ENCODE measurements at regions of chr5 and their contacts with region 1.

Region 1: DNA sequence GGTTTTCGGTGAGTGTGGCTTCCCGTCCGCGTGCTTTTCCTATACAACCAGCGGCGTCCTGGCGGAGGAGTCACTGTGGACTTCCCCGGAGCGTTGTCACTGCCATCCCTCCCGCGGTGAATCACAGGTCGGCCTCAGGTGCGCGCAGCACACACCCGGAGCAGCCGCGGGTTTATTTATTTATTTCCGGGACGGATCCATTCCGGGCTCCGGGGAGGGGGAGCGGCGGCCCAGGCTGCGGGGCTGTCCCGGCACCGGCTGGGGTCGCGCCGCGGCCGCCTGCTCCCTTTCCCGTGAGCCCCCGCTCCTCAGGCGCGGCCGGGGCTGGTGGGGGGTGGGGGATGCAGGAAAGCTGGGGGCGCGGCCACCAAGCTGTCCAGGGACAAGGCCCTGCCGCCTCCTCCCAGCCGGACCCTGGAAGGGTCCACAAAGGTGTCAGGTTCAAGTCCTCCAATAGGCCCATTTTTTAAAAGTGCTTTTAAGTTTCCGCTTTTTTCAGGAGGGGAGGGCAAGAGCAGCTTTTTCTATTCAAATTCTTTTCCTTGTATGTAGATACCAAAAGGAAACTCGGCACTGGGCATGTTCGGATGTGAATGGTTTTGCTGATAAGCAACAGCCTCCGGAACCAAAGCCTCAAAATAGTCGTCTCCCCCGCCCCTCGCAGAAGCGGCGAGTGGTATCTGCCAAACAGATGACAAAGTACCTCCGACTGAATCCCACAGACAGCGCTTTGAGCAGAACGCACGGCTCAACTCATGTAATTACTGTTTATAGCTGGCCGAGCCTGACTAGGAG is 192.5 kb downstream of the CD180 start:
- DNase-seq: peak; percentile 96
- H3K4me3 Mint-ChIP-seq: peak overlapping the region; percentile 96
- H3K27ac Mint-ChIP-seq: peak overlapping the region; percentile 97
- H3K4me1 Mint-ChIP-seq: peaks cover 56% of the 10 kb centered on the region
- H3K27me3 Mint-ChIP-seq: no peaks in the 10 kb centered on the region

Region 2: DNA sequence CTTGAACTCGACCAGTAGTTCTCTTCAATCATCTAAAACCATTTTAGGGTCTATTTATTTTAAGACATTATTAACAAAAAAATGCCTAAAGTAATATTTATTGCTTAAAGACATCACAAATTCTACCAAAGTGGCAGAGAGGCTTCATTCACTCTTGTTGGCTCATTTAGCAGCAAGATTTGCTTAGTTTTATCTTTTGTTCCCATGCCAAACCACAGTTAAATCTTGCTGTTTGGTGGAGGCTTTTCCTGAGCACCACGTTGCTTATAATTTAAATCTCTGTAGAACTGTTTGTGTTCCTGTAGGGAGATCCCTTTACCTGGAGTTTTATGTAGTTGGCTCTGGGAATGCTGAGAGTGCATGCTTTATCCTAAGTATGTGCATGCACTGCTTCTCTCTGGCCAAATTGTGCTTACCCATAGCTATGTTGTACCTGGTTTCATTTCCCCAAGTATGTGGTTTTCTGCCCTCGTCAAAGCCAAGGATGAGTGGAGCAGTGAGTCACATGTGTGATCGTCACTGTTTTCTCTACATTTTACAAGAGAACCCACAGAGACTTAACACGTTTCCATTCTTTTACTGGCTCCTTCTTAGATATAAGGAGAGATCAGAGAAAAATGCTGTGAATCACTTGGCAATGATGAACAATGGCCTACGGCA is 450.1 kb before region 1 on chr5:
- intact Hi-C with region 1: loop called (anchors 10 kb)
- DNase-seq: peak; percentile 80
- H3K4me3 Mint-ChIP-seq: no peak overlapping the region
- H3K27ac Mint-ChIP-seq: peak overlapping the region; percentile 27
- H3K4me1 Mint-ChIP-seq: peaks cover 29% of the 10 kb centered on the region
- H3K27me3 Mint-ChIP-seq: no peaks in the 10 kb centered on the region

Region 3: GRCh38 chr5:66840511-66841013 is 163.6 kb before region 1 on chr5:
- intact Hi-C with region 1: loop called (anchors 2 kb)
- DNase-seq: peak; percentile 85
- H3K4me3 Mint-ChIP-seq: peak overlapping the region; percentile 57
- H3K27ac Mint-ChIP-seq: peak overlapping the region; percentile 94
- H3K4me1 Mint-ChIP-seq: peaks cover 56% of the 10 kb centered on the region
- H3K27me3 Mint-ChIP-seq: no peaks in the 10 kb centered on the region

Region 4: GRCh38 chr5:67032921-67033664 is 29.0 kb after region 1 on chr5:
- intact Hi-C with region 1: loop called (anchors 1 kb)
- DNase-seq: no peak
- H3K4me3 Mint-ChIP-seq: no peak overlapping the region
- H3K27ac Mint-ChIP-seq: no peak overlapping the region
- H3K4me1 Mint-ChIP-seq: peaks cover 64% of the 10 kb centered on the region
- H3K27me3 Mint-ChIP-seq: no peaks in the 10 kb centered on the region

Region 5: DNA sequence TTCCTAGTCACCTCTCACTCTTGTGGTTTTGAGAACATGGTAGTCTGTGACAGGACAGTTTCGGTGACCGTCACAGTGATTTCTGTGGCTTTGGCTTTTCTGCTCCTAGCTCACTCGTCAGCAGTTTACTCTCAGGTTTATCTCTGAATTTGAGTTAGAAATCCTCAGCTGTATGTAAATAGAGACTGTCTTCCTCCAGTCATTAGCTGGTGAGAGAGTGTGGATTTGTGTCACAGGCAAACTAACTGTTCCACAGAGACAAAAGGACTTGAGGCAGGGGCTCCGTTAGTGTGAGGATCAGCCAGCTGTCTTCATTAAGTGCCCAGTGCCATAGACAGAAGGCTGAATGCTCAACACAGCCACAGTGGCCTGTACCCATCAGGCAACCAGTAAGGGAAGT is 61.1 kb after region 1 on chr5:
- intact Hi-C with region 1: loop called (anchors 2 kb)
- DNase-seq: peak; percentile 61
- H3K4me3 Mint-ChIP-seq: no peak overlapping the region
- H3K27ac Mint-ChIP-seq: peak overlapping the region; percentile 59
- H3K4me1 Mint-ChIP-seq: peaks cover 13% of the 10 kb centered on the region
- H3K27me3 Mint-ChIP-seq: no peaks in the 10 kb centered on the region

Region 6: DNA sequence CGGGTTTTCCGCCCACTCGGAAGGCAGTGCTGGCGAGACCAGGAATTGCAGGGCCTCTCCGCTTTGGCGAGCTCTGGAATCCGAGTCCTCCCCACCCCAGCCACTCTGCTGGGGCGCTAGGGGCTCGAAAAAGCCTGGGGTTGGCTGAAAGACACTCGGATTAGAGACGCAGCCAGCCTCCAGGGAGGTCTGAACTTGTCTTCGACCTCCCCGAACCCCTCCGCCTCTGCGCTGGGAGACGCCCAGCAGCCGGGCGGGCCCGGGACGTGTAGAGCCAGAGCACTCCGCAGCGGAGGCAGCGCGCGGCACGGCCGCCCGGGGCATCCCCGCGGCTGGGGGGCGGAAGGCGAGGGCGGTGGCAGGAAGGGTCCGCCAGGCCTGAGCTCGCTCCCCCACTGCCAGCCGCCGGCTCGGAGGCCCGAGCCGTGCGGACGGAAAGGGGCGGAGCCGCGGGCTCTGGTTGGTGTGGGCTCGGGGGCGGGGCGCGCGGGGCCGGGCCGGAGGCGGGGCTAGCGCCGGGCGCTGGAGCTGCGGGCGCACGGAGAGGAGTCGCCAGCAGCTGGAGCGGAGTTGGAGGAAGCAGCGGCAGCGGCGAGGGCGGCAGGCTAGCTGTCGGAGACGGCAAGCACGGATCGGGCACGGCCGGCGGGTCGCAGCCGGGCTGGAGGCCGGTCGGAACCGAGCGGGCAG is 1211.2 kb after region 1 on chr5 and contains the start of gene PIK3R1:
- intact Hi-C with region 1: loop called (anchors 1 kb)
- DNase-seq: peak; percentile 97
- H3K4me3 Mint-ChIP-seq: peak within 1 kb of the TSS; percentile 89
- H3K27ac Mint-ChIP-seq: peak within 1 kb of the TSS; percentile 95
- H3K4me1 Mint-ChIP-seq: peaks cover 34% of the 10 kb centered on the region
- H3K27me3 Mint-ChIP-seq: no peaks in the 10 kb centered on the region
- total RNA-seq, gene PIK3R1: 35.2 and 38.6 TPM in 2 replicates